ENCODE measurements at regions of chr2 and their contacts with region 1.

Region 1: GRCh38 chr2:186503848-186504606 is 18.0 kb downstream of the ZC3H15 start:
- DNase-seq: peak; percentile 53
- H3K4me3 ChIP-seq: no peak overlapping the region
- H3K27ac ChIP-seq: no peak overlapping the region
- H3K4me1 ChIP-seq: no peaks in the 10 kb centered on the region
- H3K27me3 ChIP-seq: no peaks in the 10 kb centered on the region
- CTCF ChIP-seq: peak; percentile 13 to 17
- POLR2A ChIP-seq: no peak

Region 2: GRCh38 chr2:186589612-186590349 is 85.8 kb after region 1 on chr2 and contains the start of gene ITGAV:
- CTCF ChIA-PET with region 1: interaction called, 24 read pairs
- POLR2A ChIA-PET with region 1: interaction called, 4 read pairs
- dilution Hi-C with region 1: no loop called
- intact Hi-C with region 1: loop called (anchors 2 kb)
- DNase-seq: peak; percentile 93
- H3K4me3 ChIP-seq: peak within 1 kb of the TSS; percentile 76 to 96 (median 83)
- H3K27ac ChIP-seq: peak within 1 kb of the TSS; percentile 97
- H3K4me1 ChIP-seq: peaks cover 32% of the 10 kb centered on the region
- H3K27me3 ChIP-seq: no peaks in the 10 kb centered on the region
- CTCF ChIP-seq: no peak
- POLR2A ChIP-seq: peak; percentile 94
- total RNA-seq, gene ITGAV: 131 and 135 TPM in 2 replicates

Region 3: GRCh38 chr2:186605041-186605440 is 101.0 kb after region 1 on chr2:
- CTCF ChIA-PET with region 1: interaction called, 13 read pairs
- POLR2A ChIA-PET with region 1: no interaction called
- dilution Hi-C with region 1: no loop called
- intact Hi-C with region 1: no loop called
- DNase-seq: peak; percentile 84
- H3K4me3 ChIP-seq: no peak overlapping the region
- H3K27ac ChIP-seq: peak overlapping the region; percentile 76
- H3K4me1 ChIP-seq: peaks cover 22% of the 10 kb centered on the region
- H3K27me3 ChIP-seq: no peaks in the 10 kb centered on the region
- CTCF ChIP-seq: no peak
- POLR2A ChIP-seq: no peak

Region 4: GRCh38 chr2:186659383-186659782 is 155.4 kb after region 1 on chr2:
- CTCF ChIA-PET with region 1: no interaction called
- POLR2A ChIA-PET with region 1: no interaction called
- dilution Hi-C with region 1: no loop called
- intact Hi-C with region 1: no loop called
- DNase-seq: no peak
- H3K4me3 ChIP-seq: no peak overlapping the region
- H3K27ac ChIP-seq: no peak overlapping the region
- H3K4me1 ChIP-seq: no peaks in the 10 kb centered on the region
- H3K27me3 ChIP-seq: no peaks in the 10 kb centered on the region
- CTCF ChIP-seq: no peak
- POLR2A ChIP-seq: no peak

Region 5: DNA sequence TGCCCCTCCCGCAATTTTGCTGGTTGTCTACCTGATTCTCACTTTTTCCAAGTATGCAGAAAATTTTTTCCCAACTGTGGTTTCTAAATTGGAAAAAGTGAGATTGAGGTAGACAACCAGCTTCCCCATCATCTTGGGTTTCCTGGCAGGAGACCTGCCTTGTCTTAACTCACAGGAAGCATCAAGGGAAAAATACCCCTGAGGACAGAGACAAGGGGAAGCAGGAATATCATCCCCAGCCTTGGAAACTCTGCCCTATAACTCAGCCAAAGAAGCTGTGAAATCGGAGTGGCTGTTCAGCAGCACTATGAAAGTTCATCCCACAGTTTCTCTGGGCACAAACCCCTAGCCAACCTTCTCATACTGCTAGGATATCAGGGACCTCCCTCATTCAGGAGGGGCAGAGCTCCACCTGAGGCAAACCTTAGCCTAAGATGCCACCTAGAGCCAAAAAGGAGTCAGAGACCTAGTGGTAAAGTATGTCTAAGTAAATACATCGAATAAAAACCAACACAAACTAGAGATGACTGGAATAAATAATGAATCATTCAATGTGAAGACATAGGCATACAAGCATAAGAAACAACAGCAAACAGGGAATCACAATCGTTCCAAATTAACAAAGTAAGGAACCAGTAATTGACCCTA is 276.8 kb after region 1 on chr2:
- CTCF ChIA-PET with region 1: no interaction called
- POLR2A ChIA-PET with region 1: no interaction called
- dilution Hi-C with region 1: no loop called
- intact Hi-C with region 1: loop called (anchors 10 kb)
- DNase-seq: peak; percentile 30
- H3K4me3 ChIP-seq: no peak overlapping the region
- H3K27ac ChIP-seq: no peak overlapping the region
- H3K4me1 ChIP-seq: no peaks in the 10 kb centered on the region
- H3K27me3 ChIP-seq: peaks cover 0 to 4% of the 10 kb centered on the region in 2 experiments
- CTCF ChIP-seq: peak in 1 of 2 donors; percentile 11
- POLR2A ChIP-seq: no peak

Region 6: GRCh38 chr2:187453078-187453641 is 949.1 kb after region 1 on chr2:
- CTCF ChIA-PET with region 1: interaction called, 3 read pairs
- POLR2A ChIA-PET with region 1: no interaction called
- dilution Hi-C with region 1: no loop called
- intact Hi-C with region 1: loop called (anchors 10 kb)
- DNase-seq: peak; percentile 68
- H3K4me3 ChIP-seq: no peak overlapping the region
- H3K27ac ChIP-seq: no peak overlapping the region
- H3K4me1 ChIP-seq: peaks cover 6% of the 10 kb centered on the region
- H3K27me3 ChIP-seq: no peaks in the 10 kb centered on the region
- CTCF ChIP-seq: peak; percentile 10 to 12
- POLR2A ChIP-seq: no peak